GM10248 (cell line): ENCODE measurements at regions of chr9 and their contacts with region 1.

Region 1: GRCh38 chr9:92716557-92716956 is 46.6 kb upstream of the IPPK start:
- DNase-seq: peak; percentile 84
- CTCF ChIP-seq: peak; percentile 88

Region 2: DNA sequence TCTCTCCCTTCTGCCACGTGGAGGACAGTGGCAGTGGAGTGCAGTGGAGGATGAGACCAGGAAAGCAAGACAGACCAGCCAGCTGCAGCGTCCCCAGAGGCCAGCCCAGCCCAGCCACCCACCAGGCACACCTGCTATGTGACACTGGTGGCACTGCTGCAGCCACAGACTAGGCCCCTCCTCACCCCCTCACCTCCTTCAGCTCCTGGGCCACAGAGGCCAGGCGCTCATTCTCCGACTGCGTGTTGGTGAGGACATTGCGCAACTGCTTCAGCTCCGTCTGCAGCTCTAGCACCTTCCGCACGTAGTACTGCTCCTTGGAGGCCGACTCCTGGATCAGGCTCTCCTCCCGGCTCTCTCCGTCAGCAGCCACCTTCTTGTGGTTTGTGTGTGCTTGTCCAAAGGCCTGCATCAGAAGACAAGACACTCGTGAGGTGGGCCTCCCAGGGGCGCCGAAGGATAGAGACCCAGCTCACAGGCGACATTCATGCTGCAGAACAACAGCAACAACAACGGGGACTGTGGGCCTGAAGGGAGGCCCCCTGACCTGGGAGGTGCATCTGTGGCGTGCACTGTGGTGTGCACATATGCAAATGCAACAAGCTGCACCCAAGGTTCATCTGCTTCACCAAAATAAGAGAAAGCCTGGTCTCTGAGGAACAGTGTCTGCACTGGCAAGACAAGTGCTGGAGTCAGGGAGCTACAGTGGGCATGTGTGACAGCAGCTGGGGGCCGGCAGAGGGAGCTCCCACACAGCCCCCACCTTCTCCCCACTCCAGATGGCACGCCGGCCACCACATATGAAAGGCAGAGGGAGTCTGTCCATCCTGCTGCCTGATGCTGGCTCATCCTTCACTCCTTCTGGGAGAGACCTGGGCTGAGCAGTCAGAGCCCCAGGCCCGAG is 12.5 kb after region 1 on chr9:
- CTCF ChIA-PET with region 1: interaction called, 56 read pairs
- POLR2A ChIA-PET with region 1: no interaction called
- DNase-seq: peak; percentile 75
- CTCF ChIP-seq: peak; percentile 44

Region 3: DNA sequence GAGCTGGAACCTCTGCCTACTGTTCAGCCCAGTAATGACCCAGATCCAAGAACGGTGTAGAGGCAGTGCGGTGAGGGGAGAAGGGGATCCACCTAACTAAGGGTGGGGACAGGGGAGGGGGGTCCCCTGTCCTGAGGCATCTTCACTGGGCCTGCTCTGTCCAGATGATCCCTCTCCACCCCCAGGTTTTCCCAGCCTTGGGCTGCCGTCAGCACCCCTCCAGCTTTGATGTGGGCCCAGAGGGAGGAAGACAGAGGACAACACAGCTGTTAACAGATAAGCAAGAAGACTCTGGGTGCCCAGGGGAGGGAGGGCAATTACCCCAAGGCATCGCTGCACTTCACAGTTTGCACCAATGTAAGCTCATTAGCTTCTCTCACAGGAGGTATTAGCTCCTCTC is 28.8 kb after region 1 on chr9:
- CTCF ChIA-PET with region 1: interaction called, 16 read pairs
- POLR2A ChIA-PET with region 1: no interaction called
- DNase-seq: no peak
- CTCF ChIP-seq: no peak

Region 4: GRCh38 chr9:92764988-92765936 is 48.7 kb after region 1 on chr9:
- CTCF ChIA-PET with region 1: interaction called, 11 read pairs
- POLR2A ChIA-PET with region 1: no interaction called
- DNase-seq: peak; percentile 99
- CTCF ChIP-seq: peak; percentile 88